Sigmoid colon (tissue), 7 donors: ENCODE measurements at regions of chr7 and their contacts with region 1.

Region 1: DNA sequence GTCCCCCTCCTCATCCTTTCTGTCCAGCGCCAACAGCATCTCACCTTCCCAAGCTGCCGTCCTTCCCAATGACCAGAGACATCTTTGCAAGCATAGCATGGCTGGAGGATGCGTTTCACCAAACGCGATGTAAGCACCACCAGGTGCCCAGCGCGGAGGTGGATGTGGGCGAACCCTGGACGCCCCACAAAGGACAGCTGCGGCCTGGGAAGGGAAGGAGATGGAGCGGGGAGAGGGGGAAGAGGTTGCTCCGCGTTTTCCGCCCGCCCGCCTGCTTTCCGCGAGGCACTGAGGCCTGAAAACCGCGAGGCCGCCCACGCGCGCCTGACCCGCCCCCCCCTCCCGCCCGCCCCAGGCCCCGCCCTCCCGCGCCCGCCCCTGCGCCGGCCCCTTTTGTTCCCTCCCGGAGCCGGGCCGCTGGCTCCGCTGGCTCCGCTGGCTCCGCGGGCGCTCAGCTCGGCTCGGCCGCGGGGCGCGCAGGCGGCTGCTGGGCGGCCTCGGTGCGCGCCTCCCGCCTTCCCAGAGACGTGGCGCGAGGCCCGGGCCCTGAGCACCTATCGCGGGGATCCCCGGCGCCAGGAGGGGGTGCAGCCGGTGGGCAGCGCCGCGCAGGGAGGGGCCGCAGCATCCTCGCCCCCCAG is at the start of gene CLIP2:
- DNase-seq: peak; percentile 88
- H3K4me3 ChIP-seq: peak within 1 kb of the TSS; percentile 82 to 96 (median 94)
- H3K27ac ChIP-seq: peak within 1 kb of the TSS; percentile 75 to 86 (median 82)
- H3K4me1 ChIP-seq: peaks cover 0 to 35% (median 28%) of the 10 kb centered on the region in 4 donors
- H3K27me3 ChIP-seq: no peaks in the 10 kb centered on the region
- CTCF ChIP-seq: no peak
- EP300 ChIP-seq: no peak
- POLR2A ChIP-seq: no peak
- total RNA-seq, gene CLIP2: 20.7 to 35.5 (median 22.3) TPM

Region 2: GRCh38 chr7:74254129-74254857 is 34.8 kb before region 1 on chr7 and contains the start of gene RFC2:
- intact Hi-C with region 1: loop called (anchors 1 kb)
- DNase-seq: peak; percentile 98
- H3K4me3 ChIP-seq: peak within 1 kb of the TSS; percentile 59 to 90 (median 72)
- H3K27ac ChIP-seq: peak within 1 kb of the TSS; percentile 89 to 96 (median 90)
- H3K4me1 ChIP-seq: peaks cover 0 to 21% (median 16%) of the 10 kb centered on the region in 4 donors
- H3K27me3 ChIP-seq: no peaks in the 10 kb centered on the region
- CTCF ChIP-seq: peak; percentile 21 to 47 (median 43)
- EP300 ChIP-seq: peak in 2 of 4 donors; percentile 44 to 70
- POLR2A ChIP-seq: peak; percentile 59 to 70
- total RNA-seq, gene RFC2: 3.3 to 17.8 (median 14.8) TPM

Region 3: DNA sequence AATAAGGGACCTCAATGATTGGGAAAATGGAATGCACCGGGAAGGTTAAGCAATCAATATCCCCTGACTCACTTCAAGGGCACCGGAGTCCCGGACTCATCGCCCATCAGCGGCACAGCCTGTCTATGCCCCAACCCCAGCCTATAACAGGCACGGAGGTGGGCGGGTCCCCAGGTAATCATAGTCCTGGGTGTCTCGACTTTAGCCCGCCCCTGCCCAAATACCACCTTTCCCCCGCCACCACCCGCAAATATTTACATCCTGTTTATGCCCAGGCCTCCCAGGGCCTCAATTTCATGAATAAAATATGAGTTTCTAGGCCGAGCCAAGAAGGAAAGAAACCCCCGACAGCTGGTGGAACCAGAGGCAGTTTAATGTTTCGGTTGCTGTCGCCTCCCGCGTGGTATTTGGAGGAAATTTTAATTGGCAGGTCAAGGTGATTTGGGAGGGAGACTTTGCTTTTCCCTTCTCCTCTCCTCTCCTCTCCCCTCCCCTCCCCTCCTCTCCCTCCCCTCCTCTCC is 19.3 kb before region 1 on chr7:
- intact Hi-C with region 1: loop called (anchors 2 kb)
- DNase-seq: no peak
- H3K4me3 ChIP-seq: peak overlapping the region; percentile 47 to 55 (median 54)
- H3K27ac ChIP-seq: peak overlapping the region in 2 of 4 donors; percentile 33 to 47
- H3K4me1 ChIP-seq: peaks cover 0 to 19% (median 6%) of the 10 kb centered on the region in 4 donors
- H3K27me3 ChIP-seq: no peaks in the 10 kb centered on the region
- CTCF ChIP-seq: no peak
- EP300 ChIP-seq: no peak
- POLR2A ChIP-seq: no peak

Region 4: GRCh38 chr7:74371381-74372341 is 82.5 kb after region 1 on chr7:
- intact Hi-C with region 1: loop called (anchors 5 kb)
- DNase-seq: no peak
- H3K4me3 ChIP-seq: no peak overlapping the region
- H3K27ac ChIP-seq: peak overlapping the region; percentile 36 to 82 (median 80)
- H3K4me1 ChIP-seq: peaks cover 0 to 34% (median 24%) of the 10 kb centered on the region in 4 donors
- H3K27me3 ChIP-seq: no peaks in the 10 kb centered on the region
- CTCF ChIP-seq: no peak
- EP300 ChIP-seq: no peak
- POLR2A ChIP-seq: no peak